GM12878 (cell line): ENCODE measurements at regions of chr9 and their contacts with region 1.

Region 1: DNA sequence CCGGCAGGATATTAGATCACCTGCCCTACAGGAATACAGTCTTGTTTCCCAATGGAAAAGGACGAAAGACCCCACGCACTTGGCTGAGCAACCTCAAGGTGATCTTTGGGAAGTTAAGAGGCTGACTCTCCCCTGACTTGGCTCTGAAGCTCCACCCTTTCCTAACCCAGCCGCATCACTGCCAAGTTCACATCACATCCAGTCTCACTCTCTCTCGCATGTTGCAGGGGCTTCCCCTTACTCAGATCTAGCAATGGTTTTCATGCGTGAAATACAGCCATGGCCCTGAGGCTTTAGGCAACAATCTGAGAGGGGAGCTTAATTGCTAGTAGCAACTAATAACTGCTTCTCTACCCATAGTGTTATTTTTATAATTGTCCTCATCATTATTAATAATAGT is 211.6 kb downstream of the DOCK8 start:
- DNase-seq: no peak
- ATAC-seq: peak; percentile 60
- H3K4me3 ChIP-seq: no peak overlapping the region
- H3K27ac ChIP-seq: no peak overlapping the region
- H3K4me1 ChIP-seq: no peaks in the 10 kb centered on the region
- H3K27me3 ChIP-seq: no peaks in the 10 kb centered on the region
- CTCF ChIP-seq: no peak
- EP300 ChIP-seq: no peak
- POLR2A ChIP-seq: no peak
- RAD21 ChIP-seq: no peak

Region 2: DNA sequence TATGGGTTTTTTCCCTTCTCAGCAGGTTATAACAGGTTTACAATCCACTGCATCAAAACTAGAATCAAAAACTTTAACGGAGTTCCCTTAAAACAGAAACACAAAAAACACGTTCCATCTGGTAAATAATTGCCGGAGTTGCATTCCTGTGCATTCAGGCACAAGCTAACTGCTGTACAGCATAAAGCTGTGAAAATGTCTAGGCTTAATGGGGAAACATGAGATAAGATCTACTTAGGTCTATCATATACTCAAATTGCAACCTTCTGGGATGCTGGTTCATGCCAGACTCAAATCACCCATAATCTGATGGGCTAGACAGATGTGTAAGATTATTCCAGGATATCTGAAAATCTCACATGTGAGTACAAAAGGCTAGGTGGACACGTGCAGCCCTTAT is 53.7 kb after region 1 on chr9:
- CTCF ChIA-PET with region 1: interaction called, 3 read pairs
- POLR2A ChIA-PET with region 1: no interaction called
- RAD21 ChIA-PET with region 1: no interaction called
- SMC1A ChIA-PET with region 1: no interaction called
- in situ Hi-C with region 1: loop called (anchors 5 kb)
- intact Hi-C with region 1: no loop called
- DNase-seq: no peak
- ATAC-seq: no peak
- H3K4me3 ChIP-seq: no peak overlapping the region
- H3K27ac ChIP-seq: no peak overlapping the region
- H3K4me1 ChIP-seq: no peaks in the 10 kb centered on the region
- H3K27me3 ChIP-seq: no peaks in the 10 kb centered on the region
- CTCF ChIP-seq: no peak
- EP300 ChIP-seq: no peak
- POLR2A ChIP-seq: no peak
- RAD21 ChIP-seq: no peak